CD4-positive, alpha-beta memory T cell (primary cell): ENCODE measurements at regions of chr12 and their contacts with region 1.

Region 1: GRCh38 chr12:47651368-47652254 is 54.2 kb downstream of the RPAP3 start:
- DNase-seq: peak; percentile 55 to 64 (median 60)
- H3K4me3 ChIP-seq: no peak overlapping the region
- H3K4me3 Mint-ChIP-seq: peak overlapping the region; percentile 37 to 77 (median 74)
- H3K27ac ChIP-seq: no peak overlapping the region
- H3K27ac Mint-ChIP-seq: peak overlapping the region in 6 of 7 donors; percentile 38 to 72 (median 70)
- H3K4me1 ChIP-seq: peaks cover 5% of the 10 kb centered on the region
- H3K4me1 Mint-ChIP-seq: peaks cover 5 to 10% (median 8%) of the 10 kb centered on the region in 4 donors
- H3K27me3 ChIP-seq: no peaks in the 10 kb centered on the region
- H3K27me3 Mint-ChIP-seq: no peaks in the 10 kb centered on the region

Region 2: DNA sequence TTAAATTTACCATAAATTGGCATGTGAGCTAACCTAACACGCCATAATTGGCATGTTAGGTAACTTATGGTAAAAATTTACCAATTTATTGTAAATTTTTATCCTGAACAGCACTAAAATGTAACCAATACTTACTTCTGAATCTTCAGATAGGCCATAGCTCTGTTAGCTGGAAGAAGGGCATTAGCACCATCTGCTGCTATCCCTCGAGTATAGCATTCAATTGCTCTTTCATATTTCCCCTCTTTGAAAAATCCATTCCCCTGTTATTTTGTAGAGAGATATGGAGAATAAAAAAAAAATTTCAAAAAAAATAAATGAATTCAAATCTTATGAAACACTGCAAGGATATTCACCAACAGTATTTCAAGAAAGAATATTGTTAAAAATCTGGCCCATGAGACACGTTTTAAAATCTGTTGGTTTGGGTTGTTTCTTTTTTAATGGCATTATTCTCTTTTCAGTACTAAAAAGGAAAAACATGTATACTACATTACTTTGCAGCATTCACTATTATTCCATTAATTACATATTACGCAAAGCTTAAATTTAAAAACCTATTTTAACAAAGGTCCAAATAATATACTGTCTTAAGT is 35.1 kb after region 1 on chr12:
- CTCF ChIA-PET with region 1: interaction called, 5 read pairs
- POLR2A ChIA-PET with region 1: no interaction called
- intact Hi-C with region 1: loop called (anchors 1 kb)
- DNase-seq: peak in 3 of 5 donors; percentile 22 to 36 (median 27)
- H3K4me3 ChIP-seq: no peak overlapping the region
- H3K4me3 Mint-ChIP-seq: no peak overlapping the region
- H3K27ac ChIP-seq: no peak overlapping the region
- H3K27ac Mint-ChIP-seq: no peak overlapping the region
- H3K4me1 ChIP-seq: no peaks in the 10 kb centered on the region
- H3K4me1 Mint-ChIP-seq: peaks cover 0 to 8% (median 3%) of the 10 kb centered on the region in 4 donors
- H3K27me3 ChIP-seq: no peaks in the 10 kb centered on the region
- H3K27me3 Mint-ChIP-seq: no peaks in the 10 kb centered on the region

Region 3: GRCh38 chr12:47767216-47767724 is 115.7 kb after region 1 on chr12:
- CTCF ChIA-PET with region 1: interaction called, 5 read pairs
- POLR2A ChIA-PET with region 1: no interaction called
- intact Hi-C with region 1: loop called (anchors 1 kb)
- DNase-seq: peak; percentile 61 to 72 (median 67)
- H3K4me3 ChIP-seq: no peak overlapping the region
- H3K4me3 Mint-ChIP-seq: no peak overlapping the region
- H3K27ac ChIP-seq: no peak overlapping the region
- H3K27ac Mint-ChIP-seq: peak overlapping the region in 1 of 7 donors; percentile 7
- H3K4me1 ChIP-seq: peaks cover under 1% of the 10 kb centered on the region
- H3K4me1 Mint-ChIP-seq: peaks cover 4 to 14% (median 6%) of the 10 kb centered on the region in 4 donors
- H3K27me3 ChIP-seq: no peaks in the 10 kb centered on the region
- H3K27me3 Mint-ChIP-seq: no peaks in the 10 kb centered on the region

Region 4: DNA sequence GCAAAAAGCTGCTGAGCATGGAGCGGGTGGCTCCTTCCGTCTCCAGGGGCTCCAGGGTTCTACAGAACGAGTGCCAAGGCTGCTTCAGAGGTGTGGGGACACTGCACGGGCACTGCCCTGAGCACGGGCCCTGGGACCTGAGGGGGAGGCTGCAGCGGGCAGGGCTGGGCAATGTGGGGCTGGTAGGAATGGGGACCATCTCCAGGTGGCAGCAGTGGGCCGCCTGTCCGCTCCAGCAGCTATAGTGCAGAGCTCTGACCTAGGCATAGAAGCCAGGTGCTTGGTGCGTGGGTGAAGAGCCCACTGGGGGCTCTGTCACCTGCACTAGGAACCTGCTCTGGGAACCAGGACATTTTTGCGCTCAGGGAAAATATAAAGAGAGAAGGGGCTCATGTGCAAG is 145.8 kb after region 1 on chr12:
- CTCF ChIA-PET with region 1: no interaction called
- POLR2A ChIA-PET with region 1: no interaction called
- intact Hi-C with region 1: no loop called
- DNase-seq: peak in 2 of 5 donors; percentile 20 to 21
- H3K4me3 ChIP-seq: no peak overlapping the region
- H3K4me3 Mint-ChIP-seq: no peak overlapping the region
- H3K27ac ChIP-seq: no peak overlapping the region
- H3K27ac Mint-ChIP-seq: peak overlapping the region in 3 of 7 donors; percentile 56 to 80 (median 73)
- H3K4me1 ChIP-seq: peaks cover 26% of the 10 kb centered on the region
- H3K4me1 Mint-ChIP-seq: peaks cover 15 to 32% (median 23%) of the 10 kb centered on the region in 4 donors
- H3K27me3 ChIP-seq: no peaks in the 10 kb centered on the region
- H3K27me3 Mint-ChIP-seq: no peaks in the 10 kb centered on the region